CD4-positive, alpha-beta memory T cell (primary cell): ENCODE measurements at regions of chr18 and their contacts with region 1.

Region 1: GRCh38 chr18:41745166-41746049 is 209.6 kb upstream of the PIK3C3 start:
- DNase-seq: no peak
- H3K4me3 ChIP-seq: no peak overlapping the region
- H3K4me3 Mint-ChIP-seq: no peak overlapping the region
- H3K27ac ChIP-seq: no peak overlapping the region
- H3K27ac Mint-ChIP-seq: no peak overlapping the region
- H3K4me1 ChIP-seq: no peaks in the 10 kb centered on the region
- H3K4me1 Mint-ChIP-seq: no peaks in the 10 kb centered on the region
- H3K27me3 ChIP-seq: no peaks in the 10 kb centered on the region
- H3K27me3 Mint-ChIP-seq: no peaks in the 10 kb centered on the region

Region 2: GRCh38 chr18:41761333-41762028 is 16.1 kb after region 1 on chr18:
- CTCF ChIA-PET with region 1: no interaction called
- POLR2A ChIA-PET with region 1: no interaction called
- intact Hi-C with region 1: loop called (anchors 1 kb)
- DNase-seq: no peak
- H3K4me3 ChIP-seq: no peak overlapping the region
- H3K4me3 Mint-ChIP-seq: no peak overlapping the region
- H3K27ac ChIP-seq: no peak overlapping the region
- H3K27ac Mint-ChIP-seq: no peak overlapping the region
- H3K4me1 ChIP-seq: no peaks in the 10 kb centered on the region
- H3K4me1 Mint-ChIP-seq: no peaks in the 10 kb centered on the region
- H3K27me3 ChIP-seq: no peaks in the 10 kb centered on the region
- H3K27me3 Mint-ChIP-seq: no peaks in the 10 kb centered on the region